ENCODE measurements at regions of chr5 and their contacts with region 1.

Region 1: DNA sequence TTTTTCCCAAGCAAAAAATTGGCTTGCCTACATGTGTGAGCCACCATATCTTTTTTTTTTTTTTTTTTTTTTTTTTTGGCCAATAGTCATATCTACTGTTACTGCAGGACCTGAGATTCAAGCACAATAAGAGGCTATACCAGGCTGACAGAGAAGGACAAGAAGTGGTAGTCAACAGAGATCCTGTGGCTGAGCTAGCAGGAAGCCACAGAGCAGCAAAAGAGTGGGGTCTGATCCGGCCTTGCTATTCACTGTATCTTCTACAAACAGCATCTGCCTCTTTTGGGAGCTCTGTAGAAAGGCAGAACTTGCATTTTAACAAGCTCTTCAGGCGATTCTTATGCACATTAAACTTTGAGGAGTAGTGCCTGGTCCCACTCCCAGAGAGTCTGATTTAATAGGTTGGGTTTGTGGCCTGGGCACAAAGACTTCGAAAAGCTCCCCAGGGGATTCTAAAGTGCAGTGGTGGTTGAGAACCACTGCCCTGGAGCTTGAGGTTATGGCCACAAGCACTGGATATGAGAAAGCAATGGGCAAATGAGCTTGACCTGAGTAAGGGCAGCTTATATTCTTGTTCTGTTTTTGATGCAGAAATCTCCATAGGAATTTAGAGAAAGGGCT is 162.8 kb downstream of the PIK3R1 start:
- DNase-seq: peak; percentile 55
- ATAC-seq: peak; percentile 90
- H3K4me3 ChIP-seq: no peak overlapping the region
- H3K27ac ChIP-seq: peak overlapping the region; percentile 15; the same call in 1 of the 2 replicates
- H3K4me1 ChIP-seq: peaks cover 22% of the 10 kb centered on the region
- H3K27me3 ChIP-seq: no peaks in the 10 kb centered on the region; a peak in 1 of 4 replicates
- CTCF ChIP-seq: no peak
- EP300 ChIP-seq: no peak
- POLR2A ChIP-seq: no peak
- RAD21 ChIP-seq: no peak

Region 2: GRCh38 chr5:67620424-67621397 is 757.6 kb before region 1 on chr5:
- CTCF ChIA-PET with region 1: no interaction called
- POLR2A ChIA-PET with region 1: no interaction called
- RAD21 ChIA-PET with region 1: no interaction called
- SMC1A ChIA-PET with region 1: no interaction called
- in situ Hi-C with region 1: no loop called
- intact Hi-C with region 1: no loop called
- DNase-seq: no peak
- ATAC-seq: peak; percentile 84
- H3K4me3 ChIP-seq: no peak overlapping the region
- H3K27ac ChIP-seq: no peak overlapping the region
- H3K4me1 ChIP-seq: no peaks in the 10 kb centered on the region
- H3K27me3 ChIP-seq: no peaks in the 10 kb centered on the region
- CTCF ChIP-seq: no peak
- EP300 ChIP-seq: no peak
- POLR2A ChIP-seq: no peak
- RAD21 ChIP-seq: no peak

Region 3: DNA sequence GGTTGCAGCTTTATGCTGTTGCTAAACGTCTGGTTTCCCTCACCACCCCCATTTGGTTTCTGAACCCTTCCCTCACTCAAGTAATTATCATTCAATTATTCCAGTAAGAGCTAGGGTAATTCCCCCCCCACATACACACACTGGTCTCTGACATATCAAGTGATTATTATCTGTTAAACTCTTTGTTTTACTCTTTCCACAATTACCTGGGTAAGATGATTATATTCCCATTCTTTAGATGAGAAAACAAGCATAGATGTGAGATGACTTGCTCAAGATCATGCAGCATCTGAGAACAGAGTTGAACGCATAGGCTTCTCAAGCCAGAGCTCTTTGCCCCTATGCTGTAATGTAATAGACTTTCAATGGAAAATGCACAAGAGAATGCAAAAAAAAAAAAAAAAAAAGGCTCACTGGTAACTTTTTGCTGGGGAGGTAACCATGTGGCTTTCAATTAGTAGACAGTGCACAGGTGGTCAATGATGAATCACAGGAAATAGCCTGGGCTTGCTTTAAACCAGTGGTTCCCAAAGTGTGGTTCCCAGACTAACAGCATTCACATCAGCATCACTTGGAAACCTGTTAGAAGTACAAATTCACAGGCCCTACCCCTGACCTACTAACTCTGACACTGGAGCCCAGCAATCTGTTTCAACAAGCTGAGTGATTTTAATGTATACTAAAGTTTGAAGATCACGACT is 75.1 kb before region 1 on chr5:
- CTCF ChIA-PET with region 1: no interaction called
- POLR2A ChIA-PET with region 1: no interaction called
- RAD21 ChIA-PET with region 1: no interaction called
- SMC1A ChIA-PET with region 1: no interaction called
- in situ Hi-C with region 1: no loop called
- intact Hi-C with region 1: loop called (anchors 5 kb)
- DNase-seq: peak; percentile 55
- ATAC-seq: peak; percentile 73
- H3K4me3 ChIP-seq: no peak overlapping the region
- H3K27ac ChIP-seq: no peak overlapping the region
- H3K4me1 ChIP-seq: peaks cover 13% of the 10 kb centered on the region; the same call in 1 of the 2 replicates
- H3K27me3 ChIP-seq: no peaks in the 10 kb centered on the region
- CTCF ChIP-seq: no peak
- EP300 ChIP-seq: no peak
- POLR2A ChIP-seq: no peak
- RAD21 ChIP-seq: no peak

Region 4: DNA sequence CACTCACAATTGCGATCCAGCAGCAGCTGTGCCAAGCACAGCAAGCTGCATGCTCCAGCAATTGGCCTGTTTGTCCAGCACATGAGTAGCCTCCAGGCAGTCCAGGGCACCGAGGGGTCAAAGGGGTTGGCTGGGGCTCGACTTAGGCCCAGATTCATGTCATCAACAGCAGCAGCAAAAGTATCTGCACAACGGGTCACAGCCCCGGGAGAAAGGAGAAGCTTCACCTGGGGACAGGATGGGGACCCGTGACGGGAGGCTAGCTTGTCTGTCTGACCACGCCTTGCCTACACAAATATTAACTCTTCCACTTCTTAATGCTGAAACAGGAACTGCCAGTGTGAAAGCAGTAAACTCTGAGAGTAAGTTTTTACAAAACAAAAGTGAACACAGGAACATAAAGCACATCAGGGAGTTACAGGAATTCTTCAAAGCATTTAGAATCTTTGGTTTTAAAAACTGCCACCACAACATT is 28.5 kb after region 1 on chr5:
- CTCF ChIA-PET with region 1: interaction called, 3 read pairs
- POLR2A ChIA-PET with region 1: interaction called, 3 read pairs
- RAD21 ChIA-PET with region 1: interaction called, 3 read pairs
- SMC1A ChIA-PET with region 1: interaction called, 17 read pairs
- in situ Hi-C with region 1: no loop called
- intact Hi-C with region 1: no loop called
- DNase-seq: peak; percentile 26
- ATAC-seq: peak; percentile 95
- H3K4me3 ChIP-seq: no peak overlapping the region; the same call in 1 of the 2 replicates
- H3K27ac ChIP-seq: peak overlapping the region; percentile 10; the same call in 1 of the 2 replicates
- H3K4me1 ChIP-seq: peaks cover 5% of the 10 kb centered on the region
- H3K27me3 ChIP-seq: no peaks in the 10 kb centered on the region
- CTCF ChIP-seq: no peak
- EP300 ChIP-seq: no peak
- POLR2A ChIP-seq: no peak
- RAD21 ChIP-seq: no peak

Region 5: DNA sequence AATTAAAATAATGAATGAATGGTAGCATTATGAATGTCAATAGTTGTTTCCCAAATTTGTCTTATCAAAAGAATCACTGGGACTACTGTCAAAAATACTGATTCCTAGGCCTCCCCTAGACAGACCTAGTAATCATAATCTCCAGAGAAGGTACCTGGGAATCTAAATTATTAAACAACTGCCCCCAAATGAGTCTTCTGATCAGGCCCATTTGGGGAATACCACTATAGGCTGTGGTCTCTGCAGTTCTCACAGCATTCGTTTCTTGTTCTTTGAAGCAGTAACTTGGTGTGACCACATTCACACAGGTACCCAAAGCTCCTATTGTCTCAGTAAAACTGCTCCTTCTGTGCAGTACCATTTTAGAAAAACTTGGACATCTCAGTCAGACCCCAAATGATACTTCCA is 68.2 kb after region 1 on chr5:
- CTCF ChIA-PET with region 1: no interaction called
- POLR2A ChIA-PET with region 1: no interaction called
- RAD21 ChIA-PET with region 1: interaction called, 3 read pairs
- SMC1A ChIA-PET with region 1: interaction called, 5 read pairs
- in situ Hi-C with region 1: no loop called
- intact Hi-C with region 1: loop called (anchors 5 kb)
- DNase-seq: peak; percentile 87
- ATAC-seq: peak; percentile 94
- H3K4me3 ChIP-seq: no peak overlapping the region
- H3K27ac ChIP-seq: peak overlapping the region; percentile 77
- H3K4me1 ChIP-seq: peaks cover 21% of the 10 kb centered on the region
- H3K27me3 ChIP-seq: no peaks in the 10 kb centered on the region
- CTCF ChIP-seq: no peak
- EP300 ChIP-seq: peak; percentile 60 to 84; a peak in 3 of 4 replicates
- POLR2A ChIP-seq: no peak
- RAD21 ChIP-seq: peak; percentile 34

Measured in GM12878 (cell line).